ENCODE measurements at regions of chr16 and their contacts with region 1.

Region 1: GRCh38 chr16:30922960-30923535 is 324 bp upstream of the FBXL19 start:
- DNase-seq: peak; percentile 100

Region 2: DNA sequence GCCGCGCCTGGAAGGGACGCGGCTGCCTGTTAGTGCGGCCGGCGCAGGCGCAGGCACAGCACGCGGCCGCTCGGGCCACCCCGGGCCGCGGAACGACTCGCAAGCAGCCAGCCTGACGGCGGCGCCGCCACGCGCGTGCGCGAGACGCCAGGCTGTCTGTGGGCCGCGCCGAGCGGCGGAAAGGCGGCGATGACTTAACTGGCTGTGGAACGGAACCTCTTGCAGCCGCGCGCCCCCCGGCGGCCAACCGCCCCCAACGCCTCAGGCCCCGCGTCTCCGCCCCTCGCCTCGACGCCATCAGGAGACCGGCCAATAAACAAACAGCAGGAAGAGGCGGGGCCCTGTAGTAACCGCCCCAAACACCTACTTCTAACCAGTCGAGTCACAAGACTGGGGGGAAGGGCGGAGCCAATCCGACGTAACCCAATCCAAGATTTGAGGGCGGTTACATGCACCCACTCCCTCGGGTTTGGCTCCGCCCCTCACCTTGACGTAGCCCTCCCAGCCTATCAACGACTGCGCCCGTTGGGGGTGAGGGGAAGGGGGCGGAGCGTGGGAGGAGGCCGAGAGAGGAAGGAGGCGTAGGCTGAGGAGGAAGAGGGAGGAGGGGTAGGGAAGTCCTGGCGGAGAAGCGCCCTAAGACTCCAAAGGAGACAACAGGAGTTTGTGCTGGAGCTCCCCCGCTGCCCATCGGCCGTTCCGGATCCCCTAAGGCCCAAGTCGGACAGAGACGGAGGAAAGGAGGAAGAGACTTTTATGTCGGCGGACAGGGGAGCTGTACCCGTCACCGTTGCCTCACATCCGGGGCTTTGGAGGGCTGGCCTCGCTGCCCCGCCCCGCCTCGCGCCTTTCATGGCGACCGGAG is 264.9 kb before region 1 on chr16 and contains the start of gene FBRS:
- intact Hi-C with region 1: loop called (anchors 5 kb)
- DNase-seq: peak; percentile 100
- total RNA-seq, gene FBRS: 33.2 TPM

Region 3: GRCh38 chr16:30761928-30762810 is 160.9 kb before region 1 on chr16 and contains the starts of genes CFAP119 and RNF40:
- intact Hi-C with region 1: loop called (anchors 1 kb)
- DNase-seq: peak; percentile 98
- total RNA-seq, gene CFAP119: 1.0 TPM
- total RNA-seq, gene RNF40: 47.9 TPM

Region 4: GRCh38 chr16:30786936-30787612 is 136.0 kb before region 1 on chr16 and contains the start of gene ZNF629:
- intact Hi-C with region 1: loop called (anchors 5 kb)
- DNase-seq: peak; percentile 82
- total RNA-seq, gene ZNF629: 22.7 TPM

Region 5: GRCh38 chr16:30805370-30806169 is 117.5 kb before region 1 on chr16:
- intact Hi-C with region 1: no loop called
- DNase-seq: peak; percentile 93

Region 6: DNA sequence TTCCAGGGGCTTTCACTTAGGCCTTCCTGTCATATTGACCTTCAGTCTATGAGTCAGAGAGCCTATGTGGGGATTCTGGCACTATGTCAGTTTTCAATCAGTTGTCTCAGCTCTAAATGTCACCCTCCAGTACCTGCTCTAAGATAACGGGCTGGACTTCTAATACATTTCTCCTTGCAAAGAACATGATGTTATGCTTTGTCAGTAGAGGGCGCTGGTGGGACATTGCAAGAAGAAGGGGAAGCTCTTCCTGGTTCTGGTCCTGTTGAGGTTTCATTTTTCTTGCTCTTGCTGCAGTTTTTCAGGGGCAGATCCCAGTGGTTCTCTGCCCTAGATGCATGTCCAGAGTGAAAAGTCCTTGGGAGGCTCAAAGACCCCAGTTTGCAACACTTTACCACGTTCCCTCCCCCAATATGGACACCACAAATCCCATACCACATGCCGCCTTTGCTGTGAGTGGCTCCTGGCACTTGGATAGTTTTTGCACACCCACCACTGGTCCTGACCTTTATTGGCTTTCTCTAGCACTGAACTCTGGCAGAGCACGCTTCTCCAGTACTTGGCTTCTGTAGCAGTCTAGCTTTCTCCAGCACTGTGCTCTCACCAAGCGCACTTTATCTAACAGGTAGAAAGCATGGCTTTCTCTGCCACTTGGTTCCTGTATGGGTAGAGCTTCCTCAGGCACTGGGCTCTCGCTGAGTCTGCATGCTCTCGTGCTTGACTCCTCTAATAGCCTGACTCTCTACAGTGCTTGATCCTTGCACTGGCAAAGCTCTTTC is 78.2 kb before region 1 on chr16:
- intact Hi-C with region 1: loop called (anchors 1 kb)
- DNase-seq: peak; percentile 79

Region 7: GRCh38 chr16:30893744-30894539 is 29.1 kb before region 1 on chr16 and contains the start of gene BCL7C:
- intact Hi-C with region 1: loop called (anchors 2 kb)
- DNase-seq: peak; percentile 97
- total RNA-seq, gene BCL7C: 27.6 TPM

Region 8: DNA sequence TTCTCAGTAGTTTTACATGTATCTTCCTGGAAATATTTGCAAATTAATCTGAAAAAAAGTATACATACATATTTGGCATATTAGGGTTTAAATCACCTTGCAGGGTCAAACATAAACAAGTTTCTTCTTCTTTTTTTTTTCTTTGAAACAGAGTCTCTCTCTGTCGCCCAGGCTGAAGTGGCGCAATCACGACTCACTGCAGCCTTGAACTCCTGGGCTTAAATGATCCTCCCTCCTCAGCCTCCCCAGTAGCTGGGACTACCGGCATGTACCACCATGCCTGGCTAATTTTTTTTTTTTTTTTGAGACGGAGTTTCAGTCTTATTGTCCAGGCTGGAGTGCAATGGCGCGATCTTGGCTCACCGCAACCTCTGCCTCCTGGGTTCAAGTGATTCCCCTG is 244.3 kb after region 1 on chr16:
- intact Hi-C with region 1: no loop called
- DNase-seq: no peak

Measured in cardiac septum (tissue), 1 donor.